Ovary (tissue), 10 donors: ENCODE measurements at regions of chr16 and their contacts with region 1.

Region 1: GRCh38 chr16:79124012-79124756 is 476.4 kb downstream of the MAF start:
- DNase-seq: no peak
- H3K4me3 ChIP-seq: no peak overlapping the region
- H3K27ac ChIP-seq: no peak overlapping the region
- H3K4me1 ChIP-seq: peaks cover 2% of the 10 kb centered on the region
- H3K27me3 ChIP-seq: no peaks in the 10 kb centered on the region
- CTCF ChIP-seq: no peak
- EP300 ChIP-seq: no peak
- POLR2A ChIP-seq: no peak

Region 2: GRCh38 chr16:79162977-79163376 is 38.8 kb after region 1 on chr16:
- intact Hi-C with region 1: loop called in 1 of 4 experiments (anchors 1 kb)
- DNase-seq: no peak
- H3K4me3 ChIP-seq: no peak overlapping the region
- H3K27ac ChIP-seq: no peak overlapping the region
- H3K4me1 ChIP-seq: peaks cover 3% of the 10 kb centered on the region
- H3K27me3 ChIP-seq: no peaks in the 10 kb centered on the region
- CTCF ChIP-seq: no peak
- EP300 ChIP-seq: no peak
- POLR2A ChIP-seq: no peak

Region 3: GRCh38 chr16:79201436-79201835 is 77.3 kb after region 1 on chr16:
- intact Hi-C with region 1: loop called in 1 of 4 experiments (anchors 2 kb)
- DNase-seq: no peak
- H3K4me3 ChIP-seq: no peak overlapping the region
- H3K27ac ChIP-seq: no peak overlapping the region
- H3K4me1 ChIP-seq: peaks cover 5% of the 10 kb centered on the region
- H3K27me3 ChIP-seq: no peaks in the 10 kb centered on the region
- CTCF ChIP-seq: no peak
- EP300 ChIP-seq: no peak
- POLR2A ChIP-seq: no peak

Region 4: GRCh38 chr16:79707876-79708275 is 583.7 kb after region 1 on chr16:
- intact Hi-C with region 1: no loop called
- DNase-seq: peak; percentile 24 to 73 (median 45)
- H3K4me3 ChIP-seq: no peak overlapping the region
- H3K27ac ChIP-seq: no peak overlapping the region
- H3K4me1 ChIP-seq: no peaks in the 10 kb centered on the region
- H3K27me3 ChIP-seq: no peaks in the 10 kb centered on the region
- CTCF ChIP-seq: no peak
- EP300 ChIP-seq: no peak
- POLR2A ChIP-seq: no peak